Activated CD8-positive, alpha-beta T cell treated with anti-CD3 and anti-CD28 coated beads for 36 hours (primary cell): ENCODE measurements at regions of chr6 and their contacts with region 1.

Region 1: DNA sequence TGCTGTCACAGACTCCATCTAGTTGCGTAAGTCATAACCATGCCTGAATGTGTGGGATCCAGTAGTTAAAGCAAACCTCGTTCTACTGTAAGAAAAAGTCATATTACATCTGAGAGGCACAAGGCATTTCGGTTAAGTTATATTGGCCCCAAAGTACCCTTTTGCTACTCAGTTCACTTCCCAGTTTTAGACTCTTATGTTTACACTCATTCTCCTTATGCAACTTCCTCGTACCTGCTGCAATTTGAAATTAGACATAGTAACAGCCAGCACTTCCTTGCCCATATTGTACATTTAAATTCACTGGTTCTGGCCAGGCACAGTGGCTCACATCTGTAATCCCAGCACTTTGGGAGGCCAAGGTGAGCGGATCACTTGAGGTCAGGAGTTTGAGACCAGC is 37.0 kb downstream of the PEX7 start:
- DNase-seq: no peak
- ATAC-seq: no peak
- H3K4me3 Mint-ChIP-seq: no peak overlapping the region
- H3K27ac Mint-ChIP-seq: no peak overlapping the region
- H3K4me1 Mint-ChIP-seq: peaks cover 6% of the 10 kb centered on the region
- H3K27me3 Mint-ChIP-seq: no peaks in the 10 kb centered on the region
- CTCF ChIP-seq: no peak

Region 2: DNA sequence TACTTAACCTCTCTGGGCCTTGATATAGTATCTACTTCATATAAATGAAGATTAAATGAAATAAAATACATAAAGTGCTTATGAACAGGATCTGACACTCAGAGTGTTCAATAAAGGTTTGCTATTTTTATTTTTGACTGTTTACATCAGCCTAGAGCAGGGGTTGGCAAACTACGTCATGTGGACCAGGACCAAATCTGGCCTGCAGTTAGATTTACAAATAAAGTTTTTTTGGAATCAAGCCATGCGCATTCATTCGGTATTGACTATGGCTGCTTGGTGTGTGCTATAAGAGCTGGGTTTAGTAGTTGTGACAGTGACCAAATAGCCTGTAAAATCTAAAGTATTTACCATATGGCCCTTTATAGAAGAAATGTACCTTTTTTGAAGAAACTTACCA is 16.2 kb before region 1 on chr6:
- CTCF ChIA-PET with region 1: interaction called, 10 read pairs
- POLR2A ChIA-PET with region 1: no interaction called
- intact Hi-C with region 1: no loop called
- DNase-seq: no peak
- ATAC-seq: no peak
- H3K4me3 Mint-ChIP-seq: no peak overlapping the region
- H3K27ac Mint-ChIP-seq: no peak overlapping the region
- H3K4me1 Mint-ChIP-seq: peaks cover 2% of the 10 kb centered on the region
- H3K27me3 Mint-ChIP-seq: no peaks in the 10 kb centered on the region
- CTCF ChIP-seq: no peak